ENCODE measurements at regions of chr2 and their contacts with region 1.

Region 1: GRCh38 chr2:45935791-45936622 is 284.5 kb downstream of the PRKCE start:
- DNase-seq: peak in 1 of 2 donors; percentile 97
- H3K4me3 ChIP-seq: no peak overlapping the region
- H3K27ac ChIP-seq: peak overlapping the region; percentile 73
- H3K4me1 ChIP-seq: peaks cover 35% of the 10 kb centered on the region
- H3K27me3 ChIP-seq: no peaks in the 10 kb centered on the region
- CTCF ChIP-seq: peak; percentile 43 to 86 (median 75)
- POLR2A ChIP-seq: no peak

Region 2: DNA sequence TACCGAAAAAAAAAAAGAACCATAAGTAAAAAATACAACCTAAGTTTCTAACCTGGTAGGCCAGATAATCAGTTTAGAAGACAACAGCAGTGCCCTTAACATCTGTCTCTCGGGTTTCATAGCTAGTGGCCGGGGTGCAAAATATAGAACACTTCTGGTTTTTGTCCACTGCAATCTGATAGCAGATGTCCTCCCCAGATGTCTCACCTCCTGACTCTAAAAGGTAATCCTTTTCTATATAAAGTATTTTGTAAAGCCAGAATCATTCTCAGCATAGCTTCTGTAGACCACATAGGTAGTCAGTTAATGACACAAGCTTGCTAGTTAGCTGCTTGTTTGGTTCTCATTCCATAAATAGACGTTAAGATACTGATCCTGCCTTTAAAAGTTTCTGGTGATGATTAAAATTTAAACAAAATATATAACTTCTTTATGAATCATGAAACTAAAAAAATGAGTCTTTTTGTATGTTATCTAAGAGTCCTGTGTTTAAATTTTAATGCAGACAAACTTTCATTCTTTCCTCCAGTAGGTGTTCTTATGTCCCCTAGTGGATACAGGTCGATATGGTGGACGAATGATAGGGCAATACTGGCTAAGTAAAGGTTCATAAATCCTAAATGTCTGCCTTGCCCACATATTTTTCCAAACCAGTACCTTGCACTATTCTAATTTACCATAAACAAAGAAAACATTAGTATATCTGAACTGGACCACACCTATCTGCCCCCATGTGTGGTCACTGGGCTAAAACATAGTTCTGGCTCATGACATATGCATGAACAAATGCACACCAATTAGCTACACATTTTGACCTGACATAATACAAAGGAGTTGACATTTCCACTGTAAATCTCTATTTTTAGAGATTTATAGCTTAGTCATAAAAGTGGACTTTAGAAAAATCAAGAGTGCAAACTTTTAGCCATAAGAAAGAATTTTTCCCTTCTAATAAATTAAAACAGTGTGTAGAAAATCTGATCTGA is 495.9 kb before region 1 on chr2:
- intact Hi-C with region 1: no loop called
- DNase-seq: no peak
- H3K4me3 ChIP-seq: no peak overlapping the region
- H3K27ac ChIP-seq: no peak overlapping the region
- H3K4me1 ChIP-seq: no peaks in the 10 kb centered on the region
- H3K27me3 ChIP-seq: no peaks in the 10 kb centered on the region
- CTCF ChIP-seq: no peak
- POLR2A ChIP-seq: no peak

Region 3: DNA sequence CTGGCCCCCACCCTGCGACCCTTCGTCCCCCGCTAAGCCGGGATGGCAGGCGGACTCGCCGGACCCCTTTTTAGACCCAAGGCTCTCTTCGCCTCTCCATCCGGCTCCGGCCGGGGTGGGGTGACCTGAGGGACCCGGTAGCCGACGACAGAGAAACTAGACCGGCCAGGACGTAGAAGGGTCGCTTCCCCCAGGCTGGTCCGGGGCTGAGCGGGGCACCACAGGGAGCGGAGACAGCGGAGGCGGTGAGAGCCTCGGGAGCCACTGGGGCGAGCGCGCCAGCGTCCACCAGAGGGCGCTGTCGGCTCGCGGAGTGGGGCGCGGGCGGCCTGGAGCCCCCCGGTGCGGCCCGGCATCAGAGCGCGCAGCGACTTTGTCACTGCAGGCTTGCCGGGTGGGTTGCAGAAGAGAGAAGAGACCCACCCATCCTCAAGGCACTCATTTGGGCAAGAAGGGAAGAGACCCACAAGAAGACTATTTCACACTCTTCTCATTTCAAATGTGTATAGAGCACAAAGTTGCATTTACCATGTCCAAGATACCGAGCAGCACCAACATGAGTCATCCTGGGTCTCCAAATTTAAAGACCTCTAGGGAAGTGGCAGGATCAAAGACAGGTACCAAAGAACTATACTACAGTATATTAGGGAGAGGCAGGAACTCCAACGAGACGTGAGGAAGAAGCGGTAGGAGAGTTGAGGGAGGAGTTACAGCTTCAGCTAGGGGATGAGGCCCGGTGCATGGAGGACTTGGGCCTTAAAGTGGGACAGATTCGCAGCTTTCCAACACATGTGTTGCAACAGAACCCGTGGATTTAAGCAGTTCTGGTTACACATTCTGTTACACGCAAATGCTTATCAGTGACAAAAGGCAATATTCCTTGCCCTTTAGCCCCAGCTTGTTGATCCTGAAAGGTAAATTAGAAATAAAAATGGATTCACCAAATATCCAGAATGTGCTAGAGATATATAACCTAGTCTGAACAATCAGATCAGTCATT is 292.2 kb before region 1 on chr2:
- intact Hi-C with region 1: loop called (anchors 2 kb)
- DNase-seq: no peak
- H3K4me3 ChIP-seq: peak overlapping the region; percentile 43 to 62
- H3K27ac ChIP-seq: peak overlapping the region; percentile 55
- H3K4me1 ChIP-seq: peaks cover 2% of the 10 kb centered on the region
- H3K27me3 ChIP-seq: no peaks in the 10 kb centered on the region
- CTCF ChIP-seq: peak; percentile 98 to 99 (median 98)
- POLR2A ChIP-seq: no peak

Region 4: GRCh38 chr2:45778720-45779171 is 157.3 kb before region 1 on chr2:
- intact Hi-C with region 1: loop called (anchors 10 kb)
- DNase-seq: no peak
- H3K4me3 ChIP-seq: no peak overlapping the region
- H3K27ac ChIP-seq: no peak overlapping the region
- H3K4me1 ChIP-seq: peaks cover 18% of the 10 kb centered on the region
- H3K27me3 ChIP-seq: no peaks in the 10 kb centered on the region
- CTCF ChIP-seq: peak in 2 of 3 experiments; percentile 35 to 75
- POLR2A ChIP-seq: no peak

Region 5: DNA sequence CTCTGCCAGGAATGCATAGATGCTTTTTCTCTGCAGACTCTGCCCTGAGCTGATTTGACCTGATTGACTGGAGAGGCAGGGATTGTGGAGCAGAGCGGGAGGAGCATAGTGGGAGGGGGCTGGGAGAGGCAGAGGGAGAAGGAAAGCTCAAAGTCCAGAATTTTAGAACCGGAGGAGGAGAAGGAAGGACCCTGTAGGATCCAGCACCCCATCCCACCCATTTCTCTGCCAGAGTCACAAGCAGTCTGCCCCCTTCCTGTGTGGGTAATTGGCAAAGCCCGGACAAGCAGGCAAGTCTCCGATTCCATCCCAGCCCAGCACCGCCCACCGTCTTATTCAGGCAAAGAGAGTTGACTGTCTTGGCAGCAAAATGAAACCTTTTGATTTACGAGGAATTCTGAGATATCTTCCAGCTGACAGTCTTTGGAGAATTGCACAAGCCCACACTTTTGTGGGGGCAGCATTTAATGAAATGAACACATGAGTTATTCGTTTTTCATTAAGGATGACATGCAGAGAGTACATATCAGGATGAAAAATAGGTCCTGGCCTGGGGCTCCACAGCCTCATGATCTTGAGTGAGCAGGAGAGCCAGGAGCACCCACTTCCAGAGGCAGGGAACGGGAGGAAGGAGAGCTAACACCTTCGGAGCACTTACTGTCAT is 876.5 kb after region 1 on chr2:
- intact Hi-C with region 1: loop called (anchors 5 kb)
- DNase-seq: peak in 1 of 2 donors; percentile 94
- H3K4me3 ChIP-seq: no peak overlapping the region
- H3K27ac ChIP-seq: peak overlapping the region; percentile 72
- H3K4me1 ChIP-seq: peaks cover 52% of the 10 kb centered on the region
- H3K27me3 ChIP-seq: no peaks in the 10 kb centered on the region
- CTCF ChIP-seq: no peak
- POLR2A ChIP-seq: no peak

Measured in vagina (tissue), 2 donors.